ENCODE measurements at regions of chr3 and their contacts with region 1.

Region 1: DNA sequence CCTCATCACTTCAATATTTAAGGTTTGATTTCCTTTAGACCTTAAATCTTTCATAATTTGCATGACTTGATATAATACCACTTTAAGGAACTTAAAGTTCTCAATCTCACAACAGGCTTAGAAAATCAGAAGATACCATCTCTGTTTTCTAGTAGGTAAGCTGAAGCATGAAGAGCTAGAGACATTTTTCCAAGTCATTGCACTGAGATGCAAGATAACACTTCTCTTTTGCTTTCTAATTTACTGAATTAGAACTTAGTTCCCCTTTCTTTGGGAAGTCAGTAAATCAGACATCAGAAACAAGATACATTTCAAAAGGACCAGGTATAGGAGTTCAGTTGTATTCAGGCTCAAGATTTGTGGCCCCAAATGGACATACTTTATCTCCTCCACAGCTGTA is 79.7 kb downstream of the DZIP3 start:
- DNase-seq: no peak
- ATAC-seq: no peak
- H3K4me3 ChIP-seq: no peak overlapping the region
- H3K27ac ChIP-seq: no peak overlapping the region
- H3K4me1 ChIP-seq: no peaks in the 10 kb centered on the region
- H3K27me3 ChIP-seq: no peaks in the 10 kb centered on the region
- CTCF ChIP-seq: no peak

Region 2: GRCh38 chr3:108642526-108642925 is 26.7 kb before region 1 on chr3:
- CTCF ChIA-PET with region 1: no interaction called
- POLR2A ChIA-PET with region 1: interaction called, 11 read pairs
- in situ Hi-C with region 1: no loop called
- intact Hi-C with region 1: no loop called
- DNase-seq: no peak
- ATAC-seq: no peak
- H3K4me3 ChIP-seq: no peak overlapping the region
- H3K27ac ChIP-seq: no peak overlapping the region
- H3K4me1 ChIP-seq: no peaks in the 10 kb centered on the region
- H3K27me3 ChIP-seq: no peaks in the 10 kb centered on the region
- CTCF ChIP-seq: no peak

Region 3: GRCh38 chr3:108736821-108737220 is 67.6 kb after region 1 on chr3:
- CTCF ChIA-PET with region 1: no interaction called
- POLR2A ChIA-PET with region 1: no interaction called
- in situ Hi-C with region 1: no loop called
- intact Hi-C with region 1: no loop called
- DNase-seq: no peak
- ATAC-seq: no peak
- H3K4me3 ChIP-seq: no peak overlapping the region
- H3K27ac ChIP-seq: no peak overlapping the region
- H3K4me1 ChIP-seq: no peaks in the 10 kb centered on the region
- H3K27me3 ChIP-seq: peaks cover 2% of the 10 kb centered on the region; the same call in 1 of the 2 replicates
- CTCF ChIP-seq: no peak

Measured in Panc1 (cell line).